A673 (cell line): ENCODE measurements at regions of chr7 and their contacts with region 1.

Region 1: GRCh38 chr7:78134256-78134655 is 335.7 kb downstream of the PHTF2 start:
- DNase-seq: peak; percentile 68
- H3K4me3 ChIP-seq: no peak overlapping the region
- H3K27ac ChIP-seq: no peak overlapping the region
- H3K4me1 ChIP-seq: peaks cover 1% of the 10 kb centered on the region
- H3K27me3 ChIP-seq: no peaks in the 10 kb centered on the region
- CTCF ChIP-seq: peak; percentile 68

Region 2: GRCh38 chr7:78437118-78437517 is 302.9 kb after region 1 on chr7:
- CTCF ChIA-PET with region 1: interaction called, 3 read pairs
- POLR2A ChIA-PET with region 1: no interaction called
- intact Hi-C with region 1: loop called (anchors 10 kb)
- DNase-seq: no peak
- H3K4me3 ChIP-seq: no peak overlapping the region
- H3K27ac ChIP-seq: no peak overlapping the region
- H3K4me1 ChIP-seq: peaks cover 3% of the 10 kb centered on the region
- H3K27me3 ChIP-seq: peaks cover 74% of the 10 kb centered on the region
- CTCF ChIP-seq: no peak

Region 3: GRCh38 chr7:78516450-78516849 is 382.2 kb after region 1 on chr7:
- CTCF ChIA-PET with region 1: no interaction called
- POLR2A ChIA-PET with region 1: no interaction called
- intact Hi-C with region 1: no loop called
- DNase-seq: no peak
- H3K4me3 ChIP-seq: no peak overlapping the region
- H3K27ac ChIP-seq: no peak overlapping the region
- H3K4me1 ChIP-seq: no peaks in the 10 kb centered on the region
- H3K27me3 ChIP-seq: no peaks in the 10 kb centered on the region
- CTCF ChIP-seq: no peak

Region 4: GRCh38 chr7:78939669-78940068 is 805.4 kb after region 1 on chr7:
- CTCF ChIA-PET with region 1: no interaction called
- POLR2A ChIA-PET with region 1: no interaction called
- intact Hi-C with region 1: loop called (anchors 10 kb)
- DNase-seq: no peak
- H3K4me3 ChIP-seq: no peak overlapping the region
- H3K27ac ChIP-seq: no peak overlapping the region
- H3K4me1 ChIP-seq: peaks cover 10% of the 10 kb centered on the region
- H3K27me3 ChIP-seq: no peaks in the 10 kb centered on the region
- CTCF ChIP-seq: no peak